Heart right ventricle (tissue), 16 donors: ENCODE measurements at regions of chr4 and their contacts with region 1.

Region 1: DNA sequence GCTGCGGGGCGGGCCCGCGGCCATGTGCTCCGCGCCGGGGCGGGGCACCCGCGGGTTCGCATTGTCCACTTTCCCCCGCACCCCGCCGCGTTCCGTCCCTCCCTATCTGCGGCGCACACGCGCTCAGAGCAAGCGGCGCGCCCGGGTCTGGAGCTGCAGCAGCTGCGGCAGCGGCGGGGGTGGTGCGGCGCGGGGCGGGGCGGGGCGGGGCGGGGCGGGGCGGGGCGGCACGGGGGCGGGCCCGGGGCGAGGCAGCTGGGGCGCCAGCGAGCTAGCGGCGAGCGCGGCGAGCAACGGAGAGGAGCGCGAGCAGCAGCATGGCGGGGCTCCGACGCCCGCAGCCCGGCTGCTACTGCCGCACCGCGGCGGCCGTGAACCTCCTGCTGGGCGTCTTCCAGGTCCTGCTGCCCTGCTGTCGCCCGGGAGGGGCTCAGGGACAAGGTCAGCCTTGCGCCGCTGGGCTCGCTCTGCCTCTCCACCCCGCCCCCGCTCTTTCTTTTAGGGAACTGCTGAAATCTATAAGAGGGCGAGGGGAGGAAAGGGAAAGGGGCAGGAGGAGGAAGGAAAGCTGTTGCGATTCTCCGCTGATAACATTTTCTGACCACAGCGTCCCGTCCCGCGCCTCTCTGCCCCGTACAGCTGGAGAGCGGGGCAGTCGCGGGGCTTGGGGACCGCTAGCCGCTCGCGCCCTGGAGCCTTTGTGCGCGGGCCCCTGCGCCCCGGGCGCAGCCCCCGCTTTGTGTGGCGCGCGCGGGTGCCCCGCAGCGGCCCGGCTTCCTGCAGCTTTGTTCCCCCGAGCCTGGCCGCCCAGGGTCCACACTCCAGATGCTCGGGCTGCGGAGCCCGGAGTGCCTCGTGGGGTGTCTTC is at the start of gene TMEM131L:
- DNase-seq: peak; percentile 60 to 77
- ATAC-seq: peak; percentile 77 to 93 (median 89)
- H3K4me3 ChIP-seq: peak within 1 kb of the TSS; percentile 61 to 98 (median 91)
- H3K27ac ChIP-seq: peak within 1 kb of the TSS; percentile 71 to 93 (median 85)
- H3K4me1 ChIP-seq: peaks cover 3 to 63% (median 48%) of the 10 kb centered on the region in 9 donors
- H3K27me3 ChIP-seq: no peaks in the 10 kb centered on the region
- CTCF ChIP-seq: peak in 5 of 9 donors; percentile 11 to 46 (median 41)
- total RNA-seq, gene TMEM131L: 9.1 to 33.6 (median 20.0) TPM

Region 2: DNA sequence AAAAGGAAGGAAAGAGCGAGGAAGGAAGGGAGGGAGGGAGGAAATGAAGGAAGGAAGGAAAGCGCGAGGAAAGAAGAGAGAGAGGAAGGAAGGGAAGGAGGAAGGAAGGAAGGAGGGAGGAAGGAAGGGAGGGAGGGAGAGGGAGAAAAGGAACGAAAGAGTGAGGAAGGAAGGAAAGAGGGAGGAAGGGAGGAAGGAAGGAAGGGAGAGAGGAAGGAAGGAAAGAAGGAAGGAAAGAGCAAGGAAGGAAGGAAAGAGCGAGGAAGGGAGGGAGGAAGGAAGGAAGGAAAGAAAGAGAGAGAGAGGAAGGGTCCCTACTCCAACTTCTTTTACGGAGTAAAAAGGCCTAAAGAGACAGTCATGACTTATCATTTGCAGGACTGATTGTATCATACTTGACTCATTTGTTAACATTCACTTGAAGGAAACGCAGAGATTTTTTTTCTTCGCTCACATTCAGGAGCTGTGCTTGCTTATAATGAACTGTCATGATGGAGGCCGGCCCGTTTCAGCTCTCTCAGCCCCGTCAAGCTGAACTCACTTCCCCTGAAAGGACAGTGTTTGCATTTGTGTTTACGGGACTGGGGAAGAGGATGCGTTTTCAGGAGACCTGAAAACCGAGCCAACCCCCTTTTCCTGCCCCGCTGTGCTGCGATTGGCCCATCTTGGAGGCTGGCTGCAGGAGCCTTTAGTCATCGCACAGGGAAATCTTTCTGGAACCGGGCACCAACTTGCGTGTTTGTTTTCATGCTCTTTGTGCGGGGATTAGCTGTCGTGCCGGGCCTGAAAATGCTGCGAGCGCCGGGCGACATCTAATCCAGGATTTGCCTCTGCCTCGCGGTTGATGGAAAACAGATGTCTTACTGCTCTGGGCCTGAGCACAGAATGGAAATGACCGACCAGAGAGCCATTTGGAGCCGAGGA is 244.3 kb before region 1 on chr4:
- intact Hi-C with region 1: no loop called
- DNase-seq: peak; percentile 58
- ATAC-seq: peak; percentile 62 to 75 (median 71)
- H3K4me3 ChIP-seq: peak overlapping the region; percentile 68 to 89 (median 82)
- H3K27ac ChIP-seq: peak overlapping the region; percentile 84 to 97 (median 96)
- H3K4me1 ChIP-seq: peaks cover 0 to 52% (median 15%) of the 10 kb centered on the region in 9 donors
- H3K27me3 ChIP-seq: peaks cover 0 to 13% (median 0%) of the 10 kb centered on the region in 7 donors
- CTCF ChIP-seq: no peak

Region 3: GRCh38 chr4:153555730-153556433 is 89.6 kb after region 1 on chr4:
- intact Hi-C with region 1: loop called in 2 of 10 experiments (anchors 5 to 10 kb)
- DNase-seq: peak; percentile 82 to 89
- ATAC-seq: peak; percentile 74 to 95 (median 90)
- H3K4me3 ChIP-seq: peak overlapping the region in 5 of 10 donors; percentile 15 to 31 (median 25)
- H3K27ac ChIP-seq: peak overlapping the region in 9 of 10 donors; percentile 18 to 86 (median 78)
- H3K4me1 ChIP-seq: peaks cover 0 to 35% (median 11%) of the 10 kb centered on the region in 9 donors
- H3K27me3 ChIP-seq: no peaks in the 10 kb centered on the region
- CTCF ChIP-seq: no peak

Region 4: DNA sequence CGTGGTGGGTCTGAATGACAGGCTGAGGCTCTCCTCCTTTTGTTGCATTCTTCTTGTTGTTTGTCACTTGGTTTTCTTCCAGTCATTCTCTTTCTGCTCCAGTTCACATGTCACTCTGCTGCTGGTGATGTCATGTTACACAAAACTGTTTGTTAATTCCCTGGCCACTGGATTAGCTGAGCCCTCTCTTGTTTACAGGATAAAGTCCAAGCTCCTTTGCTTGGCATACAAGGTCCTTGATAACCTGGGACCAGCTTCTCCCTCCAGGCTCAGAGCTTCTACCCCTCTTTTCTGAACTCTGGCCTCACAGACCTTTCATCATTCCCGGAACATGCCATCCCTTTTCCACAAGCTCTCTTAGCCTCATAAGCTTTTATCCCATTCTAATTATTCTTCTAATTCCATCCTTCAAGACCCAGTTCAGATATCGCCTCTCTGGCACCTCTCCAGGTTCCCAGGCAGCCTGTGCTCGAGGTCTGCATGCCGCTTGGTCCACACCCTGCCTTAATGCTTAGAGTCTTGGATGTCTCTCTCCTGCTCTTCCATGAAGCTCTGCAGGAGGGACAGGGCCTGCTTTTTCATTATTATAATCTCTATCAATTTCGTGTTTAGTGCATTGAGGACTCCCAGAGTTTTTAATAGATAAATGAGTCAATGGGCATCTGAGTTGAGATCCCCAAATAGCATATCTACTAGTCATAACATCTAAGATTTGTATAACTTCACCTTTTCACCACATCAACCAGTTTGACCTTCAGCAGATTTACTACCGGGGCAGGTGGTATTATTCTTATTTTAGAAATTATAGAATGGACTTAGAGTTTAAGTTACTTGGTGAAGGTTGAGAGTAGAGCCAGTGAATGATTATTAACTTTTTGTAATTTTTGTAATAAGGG is 98.6 kb after region 1 on chr4:
- intact Hi-C with region 1: loop called in 5 of 10 experiments (anchors 5 to 10 kb)
- DNase-seq: no peak
- ATAC-seq: peak in 7 of 8 donors; percentile 70 to 86 (median 75)
- H3K4me3 ChIP-seq: no peak overlapping the region
- H3K27ac ChIP-seq: peak overlapping the region; percentile 1 to 80 (median 68)
- H3K4me1 ChIP-seq: peaks cover 12 to 50% (median 29%) of the 10 kb centered on the region in 9 donors
- H3K27me3 ChIP-seq: no peaks in the 10 kb centered on the region
- CTCF ChIP-seq: no peak